OCI-LY7 (cell line): ENCODE measurements at regions of chr2 and their contacts with region 1.

Region 1: GRCh38 chr2:63300835-63301234 is 250.2 kb downstream of the OTX1 start:
- DNase-seq: peak; percentile 38
- H3K4me3 ChIP-seq: no peak overlapping the region
- H3K27ac ChIP-seq: no peak overlapping the region
- H3K4me1 ChIP-seq: no peaks in the 10 kb centered on the region
- CTCF ChIP-seq: peak; percentile 69

Region 2: DNA sequence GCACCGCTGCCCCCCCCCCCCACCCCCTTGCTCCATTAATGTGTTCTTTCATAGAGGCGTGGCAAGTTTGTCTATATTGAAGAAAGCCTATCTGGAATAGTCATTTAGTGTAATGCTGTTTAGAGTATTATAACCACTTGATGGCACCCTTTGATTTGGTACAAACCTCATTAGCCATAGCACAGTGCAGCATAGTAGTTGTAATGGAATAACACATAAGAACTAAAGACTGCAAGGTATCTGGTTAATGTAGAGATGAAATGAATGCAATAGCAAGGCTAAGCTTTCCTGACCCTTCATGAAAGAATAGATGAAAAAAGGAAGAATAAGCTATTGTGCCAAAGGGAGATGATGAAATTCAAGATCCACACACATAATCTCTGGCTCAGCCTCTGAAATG is 513.4 kb before region 1 on chr2:
- CTCF ChIA-PET with region 1: no interaction called
- POLR2A ChIA-PET with region 1: no interaction called
- intact Hi-C with region 1: loop called (anchors 10 kb)
- DNase-seq: peak; percentile 35
- H3K4me3 ChIP-seq: no peak overlapping the region
- H3K27ac ChIP-seq: no peak overlapping the region
- H3K4me1 ChIP-seq: no peaks in the 10 kb centered on the region
- CTCF ChIP-seq: peak; percentile 60

Region 3: DNA sequence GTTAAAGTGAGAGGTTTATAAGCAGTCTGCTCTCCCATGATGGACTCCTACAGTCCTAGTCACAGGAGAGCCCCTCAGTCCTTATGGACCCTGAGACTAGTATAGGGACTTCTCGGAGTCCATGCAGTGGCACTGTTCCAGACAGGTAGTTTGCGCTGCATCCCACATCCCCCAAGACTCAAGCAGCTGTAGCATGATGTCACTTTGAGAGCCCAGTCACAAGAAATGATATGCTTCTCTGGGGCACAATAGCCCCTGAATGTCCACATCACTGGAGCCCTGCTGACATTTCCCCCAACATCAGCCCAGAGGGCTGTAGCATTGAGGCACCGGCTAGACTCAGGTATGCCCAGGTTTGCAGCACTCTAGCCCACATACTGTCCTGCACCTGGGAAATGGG is 30.1 kb before region 1 on chr2:
- CTCF ChIA-PET with region 1: no interaction called
- POLR2A ChIA-PET with region 1: no interaction called
- intact Hi-C with region 1: no loop called
- DNase-seq: no peak
- H3K4me3 ChIP-seq: no peak overlapping the region
- H3K27ac ChIP-seq: no peak overlapping the region
- H3K4me1 ChIP-seq: no peaks in the 10 kb centered on the region
- CTCF ChIP-seq: no peak